Activated naive CD4-positive, alpha-beta T cell treated with anti-CD3 and anti-CD28 coated beads for 36 hours (primary cell): ENCODE measurements at regions of chr4 and their contacts with region 1.

Region 1: GRCh38 chr4:1403591-1404572 is 2.4 kb downstream of the NKX1-1 start:
- DNase-seq: no peak
- H3K4me3 Mint-ChIP-seq: no peak overlapping the region
- H3K27ac Mint-ChIP-seq: no peak overlapping the region
- H3K4me1 Mint-ChIP-seq: peaks cover 9% of the 10 kb centered on the region
- H3K27me3 Mint-ChIP-seq: peaks cover 40% of the 10 kb centered on the region

Region 2: GRCh38 chr4:1255151-1255550 is 148.7 kb before region 1 on chr4:
- CTCF ChIA-PET with region 1: no interaction called
- intact Hi-C with region 1: no loop called
- DNase-seq: no peak
- H3K4me3 Mint-ChIP-seq: no peak overlapping the region
- H3K27ac Mint-ChIP-seq: no peak overlapping the region
- H3K4me1 Mint-ChIP-seq: peaks cover 70% of the 10 kb centered on the region
- H3K27me3 Mint-ChIP-seq: no peaks in the 10 kb centered on the region

Region 3: GRCh38 chr4:1417522-1418390 is 13.9 kb after region 1 on chr4:
- CTCF ChIA-PET with region 1: no interaction called
- intact Hi-C with region 1: no loop called
- DNase-seq: no peak
- H3K4me3 Mint-ChIP-seq: no peak overlapping the region
- H3K27ac Mint-ChIP-seq: no peak overlapping the region
- H3K4me1 Mint-ChIP-seq: peaks cover 5% of the 10 kb centered on the region
- H3K27me3 Mint-ChIP-seq: peaks cover 30% of the 10 kb centered on the region

Region 4: DNA sequence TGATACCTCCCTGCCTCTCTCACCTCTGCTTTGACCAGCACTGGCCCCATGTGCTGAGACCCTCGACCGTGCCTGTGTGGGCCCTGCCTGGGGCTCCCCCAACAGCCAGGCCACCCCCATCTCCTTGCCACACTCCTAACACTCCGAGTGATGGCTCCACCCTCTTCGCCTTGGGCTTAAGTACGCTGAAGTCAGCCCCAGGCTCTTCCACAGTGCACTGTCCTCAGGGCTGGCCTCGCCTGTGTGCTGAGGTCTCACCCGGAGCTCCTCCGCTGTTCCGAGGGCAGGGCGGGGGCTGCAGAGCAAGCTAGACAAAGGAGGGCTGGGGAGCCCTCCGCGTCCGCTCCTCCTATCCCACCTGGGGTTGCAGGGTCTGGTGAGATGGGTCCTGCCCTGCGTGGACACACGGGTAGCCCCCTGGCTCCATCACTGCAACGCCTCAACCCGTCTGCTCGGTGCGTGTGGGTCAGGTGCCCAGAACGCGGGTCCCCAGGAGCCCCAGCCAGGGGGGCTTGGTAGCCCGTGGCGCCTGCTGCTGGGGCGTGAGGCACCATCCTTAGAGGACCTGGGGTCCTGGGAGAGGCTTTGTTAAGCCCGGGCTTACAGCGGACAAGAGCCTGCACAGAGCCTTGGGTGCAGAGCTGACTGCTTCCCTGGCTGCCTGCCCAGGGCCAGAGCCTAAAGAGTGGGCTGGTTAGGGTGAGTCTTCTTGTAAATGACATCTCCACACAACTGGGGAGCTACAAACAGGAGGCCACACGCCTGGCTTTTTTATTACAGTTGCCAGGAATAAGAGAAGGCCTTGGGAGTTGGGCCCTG is 44.9 kb after region 1 on chr4:
- CTCF ChIA-PET with region 1: no interaction called
- intact Hi-C with region 1: loop called (anchors 5 kb)
- DNase-seq: no peak
- H3K4me3 Mint-ChIP-seq: no peak overlapping the region
- H3K27ac Mint-ChIP-seq: no peak overlapping the region
- H3K4me1 Mint-ChIP-seq: no peaks in the 10 kb centered on the region
- H3K27me3 Mint-ChIP-seq: peaks cover 5% of the 10 kb centered on the region

Region 5: DNA sequence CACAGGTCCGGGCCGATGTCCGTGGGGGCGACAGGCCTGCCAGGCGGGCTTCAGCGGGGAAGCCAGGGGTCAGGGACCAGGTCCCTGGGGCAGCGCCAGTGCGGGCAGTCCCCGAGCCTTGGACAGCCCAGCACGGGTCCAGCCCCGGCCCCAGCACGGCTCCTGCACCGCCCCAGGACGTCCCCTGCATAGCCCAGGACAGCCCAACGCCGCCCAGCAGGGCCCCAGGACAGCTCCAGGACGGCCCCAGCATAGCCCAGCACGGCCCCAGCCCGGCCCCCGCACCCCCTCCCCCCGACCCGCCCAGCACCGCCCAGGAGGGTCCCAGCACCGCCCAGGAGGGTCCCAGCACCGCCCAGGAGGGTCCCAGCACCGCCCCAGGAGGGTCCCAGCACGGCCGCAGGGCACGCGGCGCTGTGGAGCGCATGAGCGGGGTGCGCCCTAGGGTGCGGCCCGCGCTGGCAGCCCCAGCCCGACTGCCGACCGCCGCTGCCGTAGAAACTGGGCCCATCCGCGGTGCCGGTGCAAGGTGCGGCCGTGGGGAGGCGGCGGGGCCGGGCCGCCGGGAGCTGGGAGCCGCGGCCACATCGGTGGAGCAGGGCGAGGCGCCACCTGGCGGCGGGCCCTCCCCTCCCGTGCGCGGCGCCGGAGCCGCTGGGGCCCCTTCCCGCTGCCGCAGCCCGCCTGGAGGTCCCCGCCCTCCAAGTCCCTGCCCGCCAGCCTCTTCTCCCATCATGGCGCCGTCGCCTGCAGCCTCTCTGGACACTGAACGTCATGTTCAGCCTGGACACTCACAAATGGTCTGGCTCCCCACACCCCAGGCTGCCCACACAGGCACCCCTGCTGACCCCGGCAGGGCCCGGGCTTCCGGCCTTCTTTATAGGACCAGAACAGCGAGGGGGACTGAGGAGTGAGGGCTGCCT is 109.1 kb after region 1 on chr4:
- CTCF ChIA-PET with region 1: no interaction called
- intact Hi-C with region 1: loop called (anchors 10 kb)
- DNase-seq: peak; percentile 34
- H3K4me3 Mint-ChIP-seq: no peak overlapping the region
- H3K27ac Mint-ChIP-seq: no peak overlapping the region
- H3K4me1 Mint-ChIP-seq: no peaks in the 10 kb centered on the region
- H3K27me3 Mint-ChIP-seq: peaks cover under 1% of the 10 kb centered on the region

Region 6: GRCh38 chr4:1784789-1785591 is 381.1 kb after region 1 on chr4:
- CTCF ChIA-PET with region 1: no interaction called
- intact Hi-C with region 1: no loop called
- DNase-seq: no peak
- H3K4me3 Mint-ChIP-seq: no peak overlapping the region
- H3K27ac Mint-ChIP-seq: no peak overlapping the region
- H3K4me1 Mint-ChIP-seq: no peaks in the 10 kb centered on the region
- H3K27me3 Mint-ChIP-seq: no peaks in the 10 kb centered on the region